ENCODE measurements at regions of chr2 and their contacts with region 1.

Region 1: GRCh38 chr2:241315093-241315878 is at the start of gene HDLBP:
- DNase-seq: peak; percentile 100
- ATAC-seq: peak; percentile 73
- H3K4me3 Mint-ChIP-seq: peak within 1 kb of the TSS; percentile 98
- H3K27ac Mint-ChIP-seq: peak within 1 kb of the TSS; percentile 100
- H3K4me1 Mint-ChIP-seq: peaks cover 78% of the 10 kb centered on the region
- H3K27me3 Mint-ChIP-seq: no peaks in the 10 kb centered on the region
- CTCF ChIP-seq: no peak
- total RNA-seq, gene HDLBP: 158 and 168 TPM in 2 replicates

Region 2: DNA sequence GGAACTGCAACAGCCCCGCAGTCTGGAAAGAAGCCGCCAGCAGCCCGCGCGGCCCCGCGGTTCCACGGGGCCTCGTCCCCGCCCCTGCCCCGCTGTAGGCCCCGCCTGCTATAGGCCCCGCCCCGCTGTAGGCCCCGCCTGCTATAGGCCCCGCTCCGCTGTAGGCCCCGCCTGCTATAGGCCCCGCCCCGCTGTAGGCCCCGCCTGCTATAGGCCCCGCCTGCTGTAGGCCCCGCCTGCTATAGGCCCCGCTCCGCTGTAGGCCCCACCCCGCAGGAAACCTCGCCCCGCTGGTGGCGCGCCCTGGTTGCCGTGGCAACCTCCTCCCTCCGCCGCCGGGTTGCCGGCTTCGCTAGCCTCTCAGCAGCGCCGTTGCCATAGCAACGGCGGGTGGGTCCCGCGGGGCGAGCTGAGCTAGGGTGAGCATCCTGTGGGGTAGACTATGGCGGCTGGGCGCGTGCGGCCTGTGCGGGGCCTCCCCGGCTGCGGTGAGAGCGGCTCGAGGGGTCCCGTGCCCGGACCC is 483.0 kb before region 1 on chr2:
- CTCF ChIA-PET with region 1: no interaction called
- POLR2A ChIA-PET with region 1: no interaction called
- intact Hi-C with region 1: loop called (anchors 1 kb)
- DNase-seq: peak; percentile 89
- ATAC-seq: peak; percentile 94
- H3K4me3 Mint-ChIP-seq: peak overlapping the region; percentile 55
- H3K27ac Mint-ChIP-seq: no peak overlapping the region
- H3K4me1 Mint-ChIP-seq: peaks cover 5% of the 10 kb centered on the region
- H3K27me3 Mint-ChIP-seq: peaks cover 18% of the 10 kb centered on the region
- CTCF ChIP-seq: no peak

Region 3: DNA sequence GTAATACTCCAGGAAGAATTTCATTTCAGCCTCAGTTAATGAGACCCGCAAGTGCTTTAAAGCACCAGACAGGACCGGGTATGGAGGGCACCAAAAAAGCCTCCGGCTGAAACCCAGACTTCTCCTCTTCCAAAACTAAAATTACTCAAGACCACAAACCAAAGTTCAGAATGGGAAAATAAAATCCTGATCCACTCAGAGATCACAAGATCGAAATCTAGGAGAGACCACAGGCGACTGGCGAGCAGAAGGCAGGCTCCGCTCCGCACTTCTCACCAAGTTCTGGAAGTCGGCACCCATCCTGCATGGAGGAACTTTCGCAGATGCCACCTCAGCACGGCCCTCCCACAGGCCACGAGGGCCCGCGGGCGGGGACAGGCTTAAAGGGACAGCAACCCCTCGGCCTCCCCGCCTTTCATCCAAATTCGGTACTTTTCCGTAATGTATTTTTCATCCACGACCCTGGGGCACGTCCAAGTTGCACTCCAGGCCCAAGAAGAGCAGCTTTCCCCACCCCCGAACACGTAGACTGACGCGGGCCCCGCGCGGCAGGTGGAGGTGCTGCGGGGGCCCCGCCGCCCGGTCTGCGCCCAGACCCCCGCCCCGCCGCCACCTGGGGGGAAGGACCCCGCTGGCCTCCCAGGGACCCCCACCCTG is 43.5 kb before region 1 on chr2:
- CTCF ChIA-PET with region 1: no interaction called
- POLR2A ChIA-PET with region 1: interaction called, 6 read pairs
- intact Hi-C with region 1: loop called (anchors 1 kb)
- DNase-seq: peak; percentile 52
- ATAC-seq: peak; percentile 70
- H3K4me3 Mint-ChIP-seq: peak overlapping the region; percentile 94
- H3K27ac Mint-ChIP-seq: peak overlapping the region; percentile 89
- H3K4me1 Mint-ChIP-seq: peaks cover 36% of the 10 kb centered on the region
- H3K27me3 Mint-ChIP-seq: no peaks in the 10 kb centered on the region
- CTCF ChIP-seq: no peak

Region 4: GRCh38 chr2:241355983-241356870 is 40.9 kb after region 1 on chr2 and contains the start of gene FARP2:
- CTCF ChIA-PET with region 1: interaction called, 5 read pairs
- POLR2A ChIA-PET with region 1: interaction called, 50 read pairs
- intact Hi-C with region 1: loop called (anchors 1 kb)
- DNase-seq: peak; percentile 94
- ATAC-seq: peak; percentile 89
- H3K4me3 Mint-ChIP-seq: peak within 1 kb of the TSS; percentile 87
- H3K27ac Mint-ChIP-seq: peak within 1 kb of the TSS; percentile 88
- H3K4me1 Mint-ChIP-seq: peaks cover 49% of the 10 kb centered on the region
- H3K27me3 Mint-ChIP-seq: no peaks in the 10 kb centered on the region
- CTCF ChIP-seq: no peak
- total RNA-seq, gene FARP2: 74.7 and 91.2 TPM in 2 replicates

Region 5: GRCh38 chr2:241609859-241610793 is 294.8 kb after region 1 on chr2:
- CTCF ChIA-PET with region 1: no interaction called
- POLR2A ChIA-PET with region 1: interaction called, 4 read pairs
- intact Hi-C with region 1: loop called (anchors 1 kb)
- DNase-seq: peak; percentile 92
- ATAC-seq: peak; percentile 99
- H3K4me3 Mint-ChIP-seq: peak overlapping the region; percentile 66
- H3K27ac Mint-ChIP-seq: peak overlapping the region; percentile 53
- H3K4me1 Mint-ChIP-seq: peaks cover 15% of the 10 kb centered on the region
- H3K27me3 Mint-ChIP-seq: no peaks in the 10 kb centered on the region
- CTCF ChIP-seq: no peak

Region 6: DNA sequence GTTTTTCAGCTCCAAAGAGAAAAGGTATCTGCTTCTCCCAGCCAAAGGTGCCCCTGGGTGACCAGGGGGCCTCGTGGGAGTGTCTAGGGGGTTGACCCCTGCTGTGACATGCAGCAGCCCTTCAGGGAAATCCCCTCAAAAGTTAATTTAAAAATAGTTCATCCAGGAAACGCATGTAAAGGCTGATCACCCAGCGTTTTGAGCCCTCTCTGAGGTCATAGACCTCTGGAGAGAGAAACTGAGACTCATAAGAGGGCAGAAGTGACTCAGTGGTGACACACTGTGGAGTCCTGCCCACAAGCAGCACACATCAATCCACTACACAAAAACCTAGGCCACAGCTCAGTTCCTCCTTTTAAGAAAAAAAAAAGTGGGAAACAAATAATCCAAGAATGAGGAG is 473.3 kb after region 1 on chr2:
- CTCF ChIA-PET with region 1: no interaction called
- POLR2A ChIA-PET with region 1: no interaction called
- intact Hi-C with region 1: loop called (anchors 5 kb)
- DNase-seq: peak; percentile 23
- ATAC-seq: peak; percentile 87
- H3K4me3 Mint-ChIP-seq: peak overlapping the region; percentile 45
- H3K27ac Mint-ChIP-seq: peak overlapping the region; percentile 79
- H3K4me1 Mint-ChIP-seq: peaks cover 35% of the 10 kb centered on the region
- H3K27me3 Mint-ChIP-seq: no peaks in the 10 kb centered on the region
- CTCF ChIP-seq: no peak